ENCODE measurements at regions of chr5 and their contacts with region 1.

Region 1: GRCh38 chr5:68661237-68661636 is 432.6 kb upstream of the SLC30A5 start:
- DNase-seq: peak; percentile 32
- H3K4me3 ChIP-seq: no peak overlapping the region
- H3K27ac ChIP-seq: no peak overlapping the region
- H3K4me1 ChIP-seq: no peaks in the 10 kb centered on the region
- H3K27me3 ChIP-seq: no peaks in the 10 kb centered on the region
- CTCF ChIP-seq: peak; percentile 41 to 62

Region 2: DNA sequence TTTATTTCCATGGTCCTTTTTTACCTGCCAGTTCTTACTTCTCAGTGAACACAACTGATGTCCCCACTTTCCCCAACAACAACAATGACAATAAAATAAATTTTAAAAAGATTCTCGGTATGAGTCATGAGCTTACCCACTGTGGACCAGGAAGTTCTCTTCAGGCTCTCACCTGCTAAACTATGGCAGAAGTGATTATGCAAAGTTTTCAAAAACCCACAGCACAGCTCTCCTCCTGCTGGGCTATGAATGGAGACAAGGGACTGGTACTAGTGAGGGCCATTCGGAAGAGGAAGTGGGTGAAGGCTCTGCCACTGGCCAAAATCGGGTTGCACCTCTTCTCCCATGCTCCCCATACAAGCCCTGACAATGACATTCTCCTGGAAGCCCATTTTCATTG is 16.3 kb before region 1 on chr5:
- CTCF ChIA-PET with region 1: interaction called, 13 read pairs
- dilution Hi-C with region 1: no loop called
- in situ Hi-C with region 1: no loop called
- intact Hi-C with region 1: no loop called
- DNase-seq: no peak
- H3K4me3 ChIP-seq: no peak overlapping the region
- H3K27ac ChIP-seq: no peak overlapping the region
- H3K4me1 ChIP-seq: no peaks in the 10 kb centered on the region
- H3K27me3 ChIP-seq: no peaks in the 10 kb centered on the region
- CTCF ChIP-seq: no peak

Region 3: DNA sequence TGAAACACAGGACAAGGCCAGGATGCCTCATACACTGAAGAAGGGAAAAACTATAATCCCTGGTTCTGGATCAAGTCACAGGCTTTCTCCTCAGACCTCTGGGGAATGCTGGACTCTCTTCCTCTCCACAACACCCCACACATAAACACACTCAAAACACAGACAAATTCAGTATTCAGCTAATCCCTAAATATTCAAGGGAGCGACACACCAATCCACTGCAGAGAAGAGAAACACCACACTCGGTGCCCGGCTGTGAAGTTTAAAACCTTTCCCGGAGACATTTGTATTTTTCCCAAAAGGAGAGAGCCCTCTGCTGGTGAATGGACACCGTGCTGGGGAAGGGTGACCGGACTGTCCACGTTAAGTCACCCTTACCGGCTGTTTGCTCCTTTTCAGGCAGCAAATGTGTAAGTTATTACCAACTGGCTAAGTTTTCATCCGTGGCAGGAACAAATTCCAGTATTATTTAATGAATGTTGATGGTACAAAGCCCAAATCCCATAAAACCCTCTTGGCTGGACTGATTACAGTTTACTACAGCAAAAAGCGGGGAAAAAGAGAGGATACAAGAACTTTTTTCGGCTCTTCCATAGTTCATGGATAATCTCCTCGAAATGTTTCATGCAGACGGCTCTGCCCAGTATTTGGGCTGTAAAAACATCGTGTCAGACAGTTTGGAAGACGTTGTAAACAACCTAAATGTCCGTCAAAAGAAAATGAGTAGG is 301.7 kb after region 1 on chr5:
- CTCF ChIA-PET with region 1: no interaction called
- dilution Hi-C with region 1: no loop called
- in situ Hi-C with region 1: loop called in 1 of 2 experiments (anchors 25 kb)
- intact Hi-C with region 1: no loop called
- DNase-seq: peak; percentile 48
- H3K4me3 ChIP-seq: no peak overlapping the region
- H3K27ac ChIP-seq: no peak overlapping the region
- H3K4me1 ChIP-seq: no peaks in the 10 kb centered on the region
- H3K27me3 ChIP-seq: no peaks in the 10 kb centered on the region
- CTCF ChIP-seq: peak; percentile 75 to 92

Measured in mammary epithelial cell (primary cell).